Heart right ventricle (tissue), 16 donors: ENCODE measurements at regions of chr1 and their contacts with region 1.

Region 1: DNA sequence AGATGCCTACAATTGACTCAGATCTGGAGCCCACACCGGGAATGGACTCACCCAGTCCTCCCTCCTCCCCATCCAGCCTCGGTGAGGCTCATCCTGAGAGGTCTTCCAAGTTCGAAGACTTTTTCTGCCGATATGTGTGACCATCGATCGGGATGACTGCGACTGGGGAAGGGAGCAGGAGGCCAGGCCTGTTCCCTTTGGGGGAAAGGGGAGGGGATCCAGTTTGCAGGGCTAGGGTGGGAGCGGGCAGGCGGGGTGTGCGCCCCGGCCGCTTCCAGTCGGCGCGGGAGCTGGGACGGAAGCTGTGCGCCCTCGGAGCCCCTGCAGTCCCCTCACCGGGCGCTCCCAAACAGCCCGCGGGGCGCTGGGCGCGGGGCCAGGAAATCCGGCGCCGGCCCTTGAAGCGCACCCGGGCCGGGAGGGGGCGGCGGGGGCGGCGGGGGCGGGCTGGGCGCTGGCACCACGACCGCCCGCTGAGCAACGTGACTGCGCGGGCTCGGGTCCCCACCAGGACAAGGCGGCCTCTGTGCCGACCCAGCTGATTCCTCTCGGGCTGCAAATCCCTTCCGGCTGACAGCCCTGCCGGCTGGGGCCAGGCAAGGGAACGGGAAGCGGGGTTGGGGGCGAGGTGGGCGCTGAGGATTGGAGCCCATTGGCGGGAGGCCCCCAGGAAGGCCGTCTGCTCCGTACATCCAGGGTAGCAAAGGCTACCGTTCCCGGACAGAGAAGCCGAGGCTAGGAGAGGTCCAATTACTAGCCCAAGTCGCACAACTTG is 103.9 kb downstream of the EBNA1BP2 start:
- DNase-seq: no peak
- ATAC-seq: peak in 4 of 8 donors; percentile 9 to 46 (median 40)
- H3K4me3 ChIP-seq: peak overlapping the region; percentile 10 to 55 (median 44)
- H3K27ac ChIP-seq: peak overlapping the region in 1 of 10 donors; percentile 26
- H3K4me1 ChIP-seq: peaks cover 0 to 11% (median 4%) of the 10 kb centered on the region in 9 donors
- H3K27me3 ChIP-seq: peaks cover 0 to 17% (median 0%) of the 10 kb centered on the region in 7 donors
- CTCF ChIP-seq: no peak

Region 2: GRCh38 chr1:42586016-42586415 is 482.1 kb before region 1 on chr1:
- intact Hi-C with region 1: loop called in 2 of 10 experiments (anchors 10 kb)
- DNase-seq: no peak
- ATAC-seq: no peak
- H3K4me3 ChIP-seq: no peak overlapping the region
- H3K27ac ChIP-seq: no peak overlapping the region
- H3K4me1 ChIP-seq: no peaks in the 10 kb centered on the region
- H3K27me3 ChIP-seq: no peaks in the 10 kb centered on the region
- CTCF ChIP-seq: no peak